Transverse colon (tissue), 4 donors: ENCODE measurements at regions of chr9 and their contacts with region 1.

Region 1: DNA sequence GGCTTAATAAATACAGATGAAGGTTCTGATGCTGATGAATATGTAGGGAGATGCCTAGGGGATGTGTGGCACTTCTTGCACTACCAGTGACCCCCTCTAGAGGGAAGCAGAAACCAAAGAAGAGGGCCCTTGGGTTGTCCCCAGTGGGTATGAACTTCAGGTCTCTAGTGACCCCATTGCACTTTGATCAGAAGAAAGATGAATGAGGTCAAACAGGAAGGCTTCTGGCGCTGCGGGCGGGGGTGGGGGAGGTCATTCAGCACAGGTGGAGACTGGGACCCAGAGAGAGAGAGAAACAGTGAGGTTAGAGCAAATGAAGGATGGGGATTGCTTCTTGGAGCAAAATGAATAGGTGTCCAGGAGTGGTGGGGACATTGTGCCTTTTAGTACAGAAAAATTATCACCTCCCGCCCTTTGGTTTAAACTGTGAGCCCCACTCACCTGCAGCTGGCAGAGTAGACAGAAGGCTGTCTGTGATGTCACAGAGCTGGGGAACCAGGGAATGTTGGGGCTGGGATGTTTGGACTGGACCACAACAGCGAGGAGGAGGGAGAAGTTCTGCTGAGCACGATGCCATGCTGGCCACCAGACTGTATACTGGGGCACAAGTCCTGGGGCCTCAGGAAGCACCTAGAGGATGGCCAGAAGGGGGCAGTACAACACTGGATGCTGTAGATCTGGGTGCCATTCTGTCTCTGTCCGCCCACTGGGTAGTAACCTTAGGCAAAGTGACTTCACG is at the start of gene TEX48:
- DNase-seq: peak; percentile 83
- H3K4me3 ChIP-seq: no peak within 1 kb of the TSS
- H3K27ac ChIP-seq: no peak within 1 kb of the TSS
- H3K4me1 ChIP-seq: peaks cover 0 to 8% (median 0%) of the 10 kb centered on the region in 4 donors
- H3K27me3 ChIP-seq: no peaks in the 10 kb centered on the region
- CTCF ChIP-seq: peak; percentile 48 to 77 (median 71)
- EP300 ChIP-seq: no peak
- POLR2A ChIP-seq: no peak
- total RNA-seq, gene TEX48: not detected

Region 2: GRCh38 chr9:114852050-114852594 is 170.4 kb after region 1 on chr9:
- in situ Hi-C with region 1: no loop called
- intact Hi-C with region 1: no loop called
- DNase-seq: no peak
- H3K4me3 ChIP-seq: no peak overlapping the region
- H3K27ac ChIP-seq: peak overlapping the region in 1 of 4 donors; percentile 35
- H3K4me1 ChIP-seq: peaks cover 0 to 26% (median 19%) of the 10 kb centered on the region in 4 donors
- H3K27me3 ChIP-seq: no peaks in the 10 kb centered on the region
- CTCF ChIP-seq: no peak
- EP300 ChIP-seq: no peak
- POLR2A ChIP-seq: no peak

Region 3: GRCh38 chr9:114906908-114907571 is 225.3 kb after region 1 on chr9:
- in situ Hi-C with region 1: loop called in 1 of 4 experiments (anchors 10 kb)
- intact Hi-C with region 1: no loop called
- DNase-seq: no peak
- H3K4me3 ChIP-seq: no peak overlapping the region
- H3K27ac ChIP-seq: peak overlapping the region in 1 of 4 donors; percentile 40
- H3K4me1 ChIP-seq: peaks cover 0 to 29% (median 9%) of the 10 kb centered on the region in 4 donors
- H3K27me3 ChIP-seq: no peaks in the 10 kb centered on the region
- CTCF ChIP-seq: peak; percentile 29 to 61 (median 41)
- EP300 ChIP-seq: no peak
- POLR2A ChIP-seq: no peak

Region 4: GRCh38 chr9:115524453-115525059 is 842.8 kb after region 1 on chr9:
- in situ Hi-C with region 1: loop called in 3 of 4 experiments (anchors 10 to 25 kb)
- intact Hi-C with region 1: no loop called
- DNase-seq: peak; percentile 10
- H3K4me3 ChIP-seq: no peak overlapping the region
- H3K27ac ChIP-seq: peak overlapping the region in 3 of 4 donors; percentile 52 to 76 (median 61)
- H3K4me1 ChIP-seq: peaks cover 0 to 8% (median 3%) of the 10 kb centered on the region in 4 donors
- H3K27me3 ChIP-seq: no peaks in the 10 kb centered on the region
- CTCF ChIP-seq: peak; percentile 66 to 88 (median 72)
- EP300 ChIP-seq: no peak
- POLR2A ChIP-seq: no peak

Region 5: DNA sequence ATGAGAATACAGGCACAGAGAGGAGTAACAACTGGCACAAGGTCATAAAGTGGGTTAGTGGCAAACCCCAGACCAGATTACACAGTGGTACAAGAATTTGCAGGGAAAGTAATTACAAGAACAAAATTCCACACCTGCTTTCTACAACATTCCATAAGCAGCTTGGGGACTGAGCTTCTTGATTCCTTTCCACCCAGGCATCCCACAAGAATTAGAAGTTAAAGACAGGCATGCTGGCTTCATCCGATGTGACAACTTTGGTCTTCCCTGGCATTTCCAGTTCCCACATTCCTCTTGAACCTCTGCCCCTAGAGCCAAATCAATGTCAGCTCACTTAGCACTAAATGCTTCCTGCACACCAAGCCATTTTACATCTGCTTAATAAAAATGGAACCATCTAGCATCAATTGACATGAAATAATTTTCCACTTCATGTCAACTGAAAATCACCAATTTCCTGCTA is 1036.0 kb after region 1 on chr9:
- in situ Hi-C with region 1: no loop called
- intact Hi-C with region 1: no loop called
- DNase-seq: no peak
- H3K4me3 ChIP-seq: no peak overlapping the region
- H3K27ac ChIP-seq: no peak overlapping the region
- H3K4me1 ChIP-seq: no peaks in the 10 kb centered on the region
- H3K27me3 ChIP-seq: no peaks in the 10 kb centered on the region
- CTCF ChIP-seq: no peak
- EP300 ChIP-seq: no peak
- POLR2A ChIP-seq: no peak